Mammary epithelial cell (primary cell): ENCODE measurements at regions of chr17 and their contacts with region 1.

Region 1: GRCh38 chr17:27654654-27655524 is 23.9 kb downstream of the LGALS9 start:
- DNase-seq: peak; percentile 47
- H3K4me3 ChIP-seq: no peak overlapping the region
- H3K27ac ChIP-seq: no peak overlapping the region
- H3K4me1 ChIP-seq: no peaks in the 10 kb centered on the region
- H3K27me3 ChIP-seq: peaks cover under 1% of the 10 kb centered on the region
- CTCF ChIP-seq: peak; percentile 55 to 74

Region 2: DNA sequence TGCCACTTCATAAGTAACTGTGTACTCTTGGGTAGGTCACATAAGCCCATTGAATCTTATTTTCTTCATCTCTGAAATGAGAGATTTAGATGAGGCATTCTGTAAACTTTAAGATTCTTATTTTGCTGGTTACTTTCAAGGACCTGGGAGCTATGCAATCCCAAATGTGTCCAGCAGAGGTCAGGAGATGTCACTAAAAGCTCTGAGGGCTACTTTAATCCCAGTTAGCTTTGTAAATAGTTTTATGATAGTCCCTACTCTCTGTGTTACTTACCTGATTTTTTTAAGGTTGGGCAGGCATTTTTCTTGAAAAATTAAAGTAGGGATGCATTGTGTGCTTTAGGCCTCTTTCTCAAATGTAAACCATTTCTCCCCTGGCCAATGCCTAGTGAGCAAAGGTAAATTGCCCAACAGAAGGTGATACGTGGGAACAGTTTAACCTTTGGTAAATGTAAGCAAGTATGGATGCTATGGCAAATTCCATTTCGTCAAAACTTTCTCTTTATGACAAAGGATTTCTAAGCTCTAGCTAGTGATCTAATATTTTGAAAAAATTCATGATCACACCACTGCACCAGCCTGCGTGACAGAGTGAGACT is 418.1 kb before region 1 on chr17:
- CTCF ChIA-PET with region 1: no interaction called
- dilution Hi-C with region 1: no loop called
- in situ Hi-C with region 1: no loop called
- intact Hi-C with region 1: loop called (anchors 5 kb)
- DNase-seq: peak; percentile 52
- H3K4me3 ChIP-seq: no peak overlapping the region
- H3K27ac ChIP-seq: no peak overlapping the region
- H3K4me1 ChIP-seq: peaks cover 7% of the 10 kb centered on the region
- H3K27me3 ChIP-seq: no peaks in the 10 kb centered on the region
- CTCF ChIP-seq: peak; percentile 90 to 96

Region 3: DNA sequence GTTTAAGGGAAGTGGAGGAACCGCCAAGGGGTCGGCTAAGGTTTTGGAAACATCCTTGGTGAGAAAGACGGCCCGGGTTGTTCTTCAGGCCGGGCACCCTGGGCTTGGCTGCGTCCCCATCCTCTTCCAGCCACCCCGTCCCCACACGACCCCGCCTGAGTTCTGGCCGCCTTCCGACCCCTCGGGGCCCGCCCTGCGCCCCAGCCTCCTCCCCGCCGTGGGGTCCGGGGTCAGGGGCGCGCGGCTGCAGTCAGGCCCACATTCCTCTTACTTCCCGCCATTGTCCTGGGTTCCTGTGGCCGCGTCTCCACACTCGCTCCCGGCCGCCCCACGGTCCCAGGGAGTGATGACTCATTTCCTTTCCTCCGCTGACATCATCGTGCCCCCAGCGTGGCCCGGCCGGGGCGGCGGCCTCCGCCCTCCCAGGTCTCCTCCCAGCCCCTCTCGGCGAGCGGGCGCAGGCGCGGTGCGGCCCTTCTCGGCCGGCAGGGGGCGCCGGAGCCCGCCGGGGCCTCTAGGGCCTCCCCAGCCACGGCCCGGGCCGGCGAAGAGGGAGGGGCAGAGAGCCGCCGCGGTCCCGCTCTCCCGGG is 301.3 kb before region 1 on chr17:
- CTCF ChIA-PET with region 1: no interaction called
- dilution Hi-C with region 1: no loop called
- in situ Hi-C with region 1: no loop called
- intact Hi-C with region 1: loop called (anchors 5 kb)
- DNase-seq: peak; percentile 89
- H3K4me3 ChIP-seq: peak overlapping the region; percentile 69 to 73 (median 72)
- H3K27ac ChIP-seq: peak overlapping the region; percentile 78
- H3K4me1 ChIP-seq: peaks cover 10% of the 10 kb centered on the region
- H3K27me3 ChIP-seq: no peaks in the 10 kb centered on the region
- CTCF ChIP-seq: peak; percentile 54 to 60

Region 4: DNA sequence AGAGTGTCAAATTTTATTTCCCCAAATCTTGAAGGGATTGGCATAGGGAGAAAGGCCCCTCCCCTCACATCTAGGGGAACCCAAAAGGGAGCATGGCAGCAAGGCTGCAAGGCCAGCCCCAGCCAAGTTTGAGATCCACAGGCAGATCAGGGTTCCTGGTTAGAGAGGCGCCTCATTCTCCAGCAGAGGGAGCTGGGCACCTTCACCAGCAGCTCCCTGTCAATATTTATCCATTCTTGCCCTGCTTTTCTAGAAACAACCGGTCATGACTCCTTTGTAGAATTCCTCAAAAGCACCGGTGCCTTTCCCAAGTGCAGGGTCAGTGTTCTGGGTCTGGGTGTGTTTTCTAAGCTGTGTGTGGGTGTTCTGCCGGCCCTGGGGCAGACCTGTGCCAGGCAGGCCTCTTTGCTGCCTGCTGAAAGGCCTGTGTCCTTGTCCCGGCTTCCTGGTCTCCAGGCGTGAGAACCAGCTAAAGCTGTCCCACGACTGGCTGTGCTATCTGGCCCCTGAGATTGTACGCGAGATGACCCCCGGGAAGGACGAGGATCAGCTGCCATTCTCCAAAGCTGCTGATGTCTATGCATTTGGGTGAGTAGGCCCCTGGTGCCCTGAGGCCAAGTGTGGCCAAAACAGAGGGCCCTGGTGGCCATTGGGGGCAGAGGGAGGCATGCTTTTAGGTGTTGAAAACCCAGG is 45.1 kb before region 1 on chr17:
- CTCF ChIA-PET with region 1: no interaction called
- dilution Hi-C with region 1: loop called (anchors 5 kb)
- in situ Hi-C with region 1: loop called in 1 of 2 experiments (anchors 5 kb)
- intact Hi-C with region 1: loop called (anchors 1 kb)
- DNase-seq: peak; percentile 42
- H3K4me3 ChIP-seq: no peak overlapping the region
- H3K27ac ChIP-seq: no peak overlapping the region
- H3K4me1 ChIP-seq: no peaks in the 10 kb centered on the region
- H3K27me3 ChIP-seq: no peaks in the 10 kb centered on the region
- CTCF ChIP-seq: peak; percentile 83 to 87

Region 5: DNA sequence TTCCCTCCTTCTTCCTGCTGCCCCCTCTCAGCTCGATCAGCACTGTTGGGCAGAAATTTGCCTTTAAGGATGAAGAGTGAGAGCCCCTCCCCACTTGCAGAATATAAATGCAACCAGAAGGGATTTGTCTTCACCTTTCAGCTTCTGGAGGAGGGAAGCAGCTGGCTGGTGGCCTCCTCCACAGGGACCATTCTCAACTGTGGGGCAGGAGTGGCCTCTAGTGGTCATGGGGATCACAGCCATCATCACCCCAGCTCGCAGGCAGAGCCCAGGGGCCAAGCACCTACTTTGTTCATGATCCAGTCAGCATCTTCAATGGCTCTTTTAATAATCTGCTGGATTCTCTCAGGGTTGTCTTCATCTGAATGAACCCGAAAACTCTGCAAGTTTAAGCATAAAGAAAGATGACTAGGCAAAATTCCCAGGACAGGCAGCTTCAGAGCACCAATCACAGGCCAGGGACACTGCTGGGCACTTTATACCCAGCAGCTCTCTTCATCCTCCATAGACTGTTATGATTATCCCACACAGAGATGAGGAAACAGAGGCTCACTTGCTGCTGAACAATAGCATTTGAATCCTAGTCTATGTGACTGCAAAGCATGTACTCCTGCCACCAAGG is 225.2 kb after region 1 on chr17:
- CTCF ChIA-PET with region 1: interaction called, 3 read pairs
- dilution Hi-C with region 1: no loop called
- in situ Hi-C with region 1: loop called (anchors 10 to 25 kb)
- intact Hi-C with region 1: loop called (anchors 1 kb)
- DNase-seq: peak; percentile 48
- H3K4me3 ChIP-seq: no peak overlapping the region
- H3K27ac ChIP-seq: no peak overlapping the region
- H3K4me1 ChIP-seq: no peaks in the 10 kb centered on the region
- H3K27me3 ChIP-seq: no peaks in the 10 kb centered on the region
- CTCF ChIP-seq: peak; percentile 92 to 94